Caco-2 (cell line): ENCODE measurements at regions of chr20 and their contacts with region 1.

Region 1: DNA sequence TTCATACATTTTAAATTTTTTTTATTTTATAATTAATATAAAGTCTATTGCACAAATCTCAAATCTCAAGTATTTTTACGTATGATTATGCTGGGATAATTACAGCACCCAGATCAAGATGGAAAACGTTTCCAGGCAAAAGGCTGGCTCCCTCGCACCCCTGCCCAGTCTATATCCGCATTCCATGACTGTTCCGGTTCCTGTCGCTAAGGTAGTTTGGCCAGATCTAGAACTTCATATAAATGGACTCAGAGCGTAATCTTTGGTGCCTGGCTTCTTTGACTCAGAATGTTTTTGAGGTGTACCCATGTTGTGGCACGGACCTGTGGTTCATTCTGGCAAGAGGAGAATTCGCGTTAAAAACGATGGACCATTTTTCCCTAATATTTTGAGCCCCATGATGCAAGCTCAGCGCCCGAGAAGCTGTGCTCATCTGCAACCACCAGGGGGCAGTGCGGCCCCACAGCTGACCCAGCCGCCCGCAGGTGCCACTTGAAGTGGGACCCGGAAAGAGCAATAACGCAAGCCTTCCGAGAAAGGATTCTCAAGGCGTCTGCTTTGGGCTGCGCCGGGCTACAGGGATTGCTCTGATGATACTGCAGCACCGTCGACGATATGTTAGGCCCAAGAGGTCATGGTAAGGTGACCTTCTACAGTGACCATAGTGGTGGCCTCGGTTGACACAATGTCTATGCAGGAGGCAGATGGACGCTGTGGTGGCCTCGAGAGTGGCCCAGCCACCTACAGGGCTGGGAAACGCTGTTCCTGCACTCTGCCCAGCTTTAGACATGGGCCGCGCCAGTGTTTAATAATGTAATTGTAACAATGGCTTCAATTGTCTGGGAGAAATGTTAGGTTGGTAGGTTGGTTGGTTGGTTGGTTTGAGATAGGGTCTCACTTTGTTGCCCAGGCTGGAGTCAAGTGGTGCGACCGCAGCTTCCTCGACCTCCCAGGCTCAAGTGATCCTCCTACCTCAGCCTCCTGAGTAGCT is 160.1 kb downstream of the ZMYND8 start:
- DNase-seq: peak; percentile 90 to 95
- H3K4me3 ChIP-seq: no peak overlapping the region
- H3K4me3 Mint-ChIP-seq: peak overlapping the region; percentile 1
- H3K27ac Mint-ChIP-seq: peak overlapping the region; percentile 44
- H3K4me1 ChIP-seq: peaks cover 25% of the 10 kb centered on the region
- H3K4me1 Mint-ChIP-seq: peaks cover 27% of the 10 kb centered on the region
- H3K27me3 ChIP-seq: no peaks in the 10 kb centered on the region
- H3K27me3 Mint-ChIP-seq: no peaks in the 10 kb centered on the region
- CTCF ChIP-seq: peak; percentile 100

Region 2: GRCh38 chr20:46998477-46999240 is 197.7 kb before region 1 on chr20:
- CTCF ChIA-PET with region 1: no interaction called
- POLR2A ChIA-PET with region 1: no interaction called
- intact Hi-C with region 1: no loop called
- DNase-seq: peak; percentile 32 to 39
- H3K4me3 ChIP-seq: no peak overlapping the region
- H3K4me3 Mint-ChIP-seq: no peak overlapping the region
- H3K27ac Mint-ChIP-seq: no peak overlapping the region
- H3K4me1 ChIP-seq: no peaks in the 10 kb centered on the region
- H3K4me1 Mint-ChIP-seq: peaks cover 10% of the 10 kb centered on the region
- H3K27me3 ChIP-seq: peaks cover 2% of the 10 kb centered on the region
- H3K27me3 Mint-ChIP-seq: peaks cover 32% of the 10 kb centered on the region
- CTCF ChIP-seq: no peak

Region 3: DNA sequence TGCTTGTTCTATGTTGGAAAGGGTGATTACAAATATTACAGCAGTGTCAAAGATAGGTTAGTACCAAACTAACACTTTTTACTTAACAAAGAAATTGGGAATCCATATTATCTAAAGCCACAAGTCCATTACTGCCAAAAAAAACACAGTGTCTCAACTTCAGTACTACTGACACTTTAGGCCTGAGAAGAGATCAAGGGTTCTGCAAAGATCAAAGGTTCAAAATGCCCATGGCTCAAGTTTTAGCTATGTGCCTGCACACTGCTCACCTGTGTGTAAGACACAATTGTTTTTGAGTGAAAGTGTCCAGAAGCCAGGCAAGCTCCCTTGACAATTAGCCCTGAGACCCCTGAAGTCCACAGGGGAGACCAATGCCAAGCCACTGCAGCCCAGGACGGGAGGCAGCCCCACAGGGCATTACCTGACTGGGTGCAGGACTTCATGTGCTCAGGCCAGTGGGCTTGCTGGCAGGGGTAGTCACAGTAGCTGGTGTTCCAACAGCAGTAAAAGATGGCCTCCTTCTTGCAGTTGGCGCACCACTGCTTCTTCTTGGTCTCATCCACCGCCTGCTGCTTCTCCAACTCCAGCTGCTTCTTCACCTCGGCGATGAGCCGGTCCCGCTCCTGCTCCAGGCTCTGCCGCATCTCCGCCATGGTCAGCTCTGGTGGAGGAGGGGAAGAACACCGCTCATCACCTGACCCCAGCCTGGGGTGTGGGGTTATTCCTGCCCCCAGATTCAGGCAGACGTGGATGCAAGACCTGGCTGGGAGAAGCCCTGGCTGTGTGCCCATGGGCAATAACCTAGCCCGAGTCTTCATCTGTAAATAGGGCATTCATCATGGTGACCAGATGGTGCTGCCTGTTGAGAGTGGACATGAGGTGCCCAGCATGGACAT is 27.8 kb after region 1 on chr20:
- CTCF ChIA-PET with region 1: no interaction called
- POLR2A ChIA-PET with region 1: no interaction called
- intact Hi-C with region 1: no loop called
- DNase-seq: no peak
- H3K4me3 ChIP-seq: no peak overlapping the region
- H3K4me3 Mint-ChIP-seq: no peak overlapping the region
- H3K27ac Mint-ChIP-seq: peak overlapping the region; percentile 57
- H3K4me1 ChIP-seq: no peaks in the 10 kb centered on the region
- H3K4me1 Mint-ChIP-seq: peaks cover 9% of the 10 kb centered on the region
- H3K27me3 ChIP-seq: no peaks in the 10 kb centered on the region
- H3K27me3 Mint-ChIP-seq: no peaks in the 10 kb centered on the region
- CTCF ChIP-seq: no peak

Region 4: DNA sequence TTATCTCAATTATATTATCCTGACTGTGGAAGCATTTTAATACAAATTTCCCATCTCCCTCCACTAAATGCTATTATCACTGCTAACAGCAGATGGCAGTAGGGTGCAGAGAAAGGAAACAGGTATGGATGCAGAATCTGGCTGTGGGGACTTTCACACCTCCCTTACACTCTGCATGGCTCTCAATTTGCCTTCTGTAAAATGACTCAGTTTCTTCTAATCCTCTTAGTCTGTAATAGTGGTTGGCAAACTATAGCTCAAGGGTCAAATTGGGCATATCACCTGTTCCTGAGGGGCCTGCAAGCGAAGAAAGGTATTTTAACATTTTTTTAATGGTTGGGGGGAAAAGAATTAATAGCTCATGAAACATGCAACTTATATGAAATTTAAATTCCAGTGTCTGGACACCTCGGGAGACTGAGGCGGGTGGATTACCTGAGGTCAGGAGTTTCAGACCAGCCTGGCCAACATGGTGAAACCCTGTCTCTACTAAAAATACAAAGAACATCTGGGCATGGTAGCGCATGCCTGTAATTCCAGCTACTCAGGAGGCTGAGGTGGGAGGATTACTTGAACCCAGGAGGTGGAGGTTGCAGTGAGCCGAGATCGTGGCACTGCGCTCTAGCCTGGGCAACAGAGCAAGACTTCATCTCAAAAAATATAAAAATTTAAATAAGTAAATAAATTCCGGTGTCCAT is 76.7 kb after region 1 on chr20:
- CTCF ChIA-PET with region 1: interaction called, 6 read pairs
- POLR2A ChIA-PET with region 1: no interaction called
- intact Hi-C with region 1: loop called (anchors 1 kb)
- DNase-seq: peak; percentile 72 to 89
- H3K4me3 ChIP-seq: no peak overlapping the region
- H3K4me3 Mint-ChIP-seq: no peak overlapping the region
- H3K27ac Mint-ChIP-seq: peak overlapping the region; percentile 11
- H3K4me1 ChIP-seq: peaks cover 7% of the 10 kb centered on the region
- H3K4me1 Mint-ChIP-seq: peaks cover 16% of the 10 kb centered on the region
- H3K27me3 ChIP-seq: no peaks in the 10 kb centered on the region
- H3K27me3 Mint-ChIP-seq: no peaks in the 10 kb centered on the region
- CTCF ChIP-seq: peak; percentile 98